ENCODE measurements at regions of chr1 and their contacts with region 1.

Region 1: GRCh38 chr1:219927956-219928790 is at the start of gene SLC30A10:
- DNase-seq: peak; percentile 32 to 38
- H3K4me3 ChIP-seq: peak within 1 kb of the TSS; percentile 60
- H3K4me3 Mint-ChIP-seq: peak within 1 kb of the TSS; percentile 74
- H3K27ac Mint-ChIP-seq: no peak within 1 kb of the TSS
- H3K4me1 ChIP-seq: peaks cover 9% of the 10 kb centered on the region; the same call in 1 of the 2 replicates
- H3K4me1 Mint-ChIP-seq: peaks cover 8% of the 10 kb centered on the region
- H3K27me3 ChIP-seq: no peaks in the 10 kb centered on the region; the same call in 1 of the 2 replicates
- H3K27me3 Mint-ChIP-seq: peaks cover 8% of the 10 kb centered on the region
- CTCF ChIP-seq: peak in 1 of 2 experiments; percentile 24
- total RNA-seq, gene SLC30A10: 0.39 and 0.65 TPM in 2 replicates

Region 2: DNA sequence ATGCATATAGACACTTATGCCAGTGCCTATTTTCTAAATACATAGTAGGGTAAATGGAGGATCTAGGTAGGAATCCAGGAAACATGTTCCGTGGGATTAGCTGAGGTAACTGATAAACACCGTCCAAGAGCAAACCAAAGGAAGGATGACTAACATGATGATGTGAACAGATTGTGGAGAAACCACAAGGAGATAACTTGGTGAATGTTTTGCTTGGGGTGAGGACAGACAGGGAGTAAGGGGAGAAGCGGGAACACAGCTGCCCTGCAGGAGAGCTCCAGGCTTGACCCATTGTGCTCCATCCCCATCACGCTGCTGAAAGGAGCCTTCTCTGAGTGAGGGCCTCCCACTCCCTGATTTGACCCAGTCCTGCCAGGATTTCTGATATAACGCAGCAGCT is 228.3 kb before region 1 on chr1:
- CTCF ChIA-PET with region 1: no interaction called
- POLR2A ChIA-PET with region 1: no interaction called
- intact Hi-C with region 1: no loop called
- DNase-seq: no peak
- H3K4me3 ChIP-seq: no peak overlapping the region
- H3K4me3 Mint-ChIP-seq: no peak overlapping the region
- H3K27ac Mint-ChIP-seq: no peak overlapping the region
- H3K4me1 ChIP-seq: no peaks in the 10 kb centered on the region
- H3K4me1 Mint-ChIP-seq: no peaks in the 10 kb centered on the region
- H3K27me3 ChIP-seq: no peaks in the 10 kb centered on the region; the same call in 1 of the 2 replicates
- H3K27me3 Mint-ChIP-seq: peaks cover 13% of the 10 kb centered on the region
- CTCF ChIP-seq: no peak

Region 3: DNA sequence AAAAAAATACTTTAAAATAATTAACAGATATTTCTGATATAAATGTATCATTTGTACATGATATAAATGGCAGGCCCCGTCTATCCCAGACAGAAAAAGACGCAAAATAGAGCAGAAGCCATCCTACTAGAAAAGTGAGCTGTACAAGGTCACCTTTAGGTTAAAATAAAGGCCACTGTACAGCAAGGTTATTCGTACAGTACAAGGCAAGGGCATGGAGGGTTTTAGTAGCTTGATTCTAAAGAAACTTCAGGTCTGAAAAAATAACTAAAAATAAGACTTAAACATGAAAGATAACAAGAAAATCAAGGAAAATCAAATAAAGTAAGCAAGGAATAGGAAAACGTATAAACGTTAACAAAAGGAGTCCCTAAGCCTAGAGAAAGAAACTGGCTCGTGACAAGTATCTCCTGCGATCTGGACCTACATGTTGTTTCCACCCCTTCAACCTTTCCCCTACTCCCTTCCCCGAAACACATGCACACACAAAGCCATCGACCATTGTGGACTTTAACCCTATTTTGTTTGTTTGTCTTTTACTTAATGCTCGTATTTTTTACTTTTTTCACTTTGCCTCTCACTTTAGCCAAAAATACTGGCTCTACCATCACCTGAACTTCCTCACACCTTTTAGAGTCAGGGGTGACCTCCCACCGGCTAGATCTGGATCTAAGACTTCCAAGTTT is 26.7 kb after region 1 on chr1:
- CTCF ChIA-PET with region 1: no interaction called
- POLR2A ChIA-PET with region 1: no interaction called
- intact Hi-C with region 1: loop called (anchors 1 kb)
- DNase-seq: no peak
- H3K4me3 ChIP-seq: no peak overlapping the region
- H3K4me3 Mint-ChIP-seq: no peak overlapping the region
- H3K27ac Mint-ChIP-seq: no peak overlapping the region
- H3K4me1 ChIP-seq: peaks cover 12% of the 10 kb centered on the region
- H3K4me1 Mint-ChIP-seq: peaks cover 7% of the 10 kb centered on the region
- H3K27me3 ChIP-seq: no peaks in the 10 kb centered on the region
- H3K27me3 Mint-ChIP-seq: no peaks in the 10 kb centered on the region
- CTCF ChIP-seq: no peak